Activated B cell treated with CpG ODN at 0.5 μM for 24 hours (primary cell): ENCODE measurements at regions of chr10 and their contacts with region 1.

Region 1: DNA sequence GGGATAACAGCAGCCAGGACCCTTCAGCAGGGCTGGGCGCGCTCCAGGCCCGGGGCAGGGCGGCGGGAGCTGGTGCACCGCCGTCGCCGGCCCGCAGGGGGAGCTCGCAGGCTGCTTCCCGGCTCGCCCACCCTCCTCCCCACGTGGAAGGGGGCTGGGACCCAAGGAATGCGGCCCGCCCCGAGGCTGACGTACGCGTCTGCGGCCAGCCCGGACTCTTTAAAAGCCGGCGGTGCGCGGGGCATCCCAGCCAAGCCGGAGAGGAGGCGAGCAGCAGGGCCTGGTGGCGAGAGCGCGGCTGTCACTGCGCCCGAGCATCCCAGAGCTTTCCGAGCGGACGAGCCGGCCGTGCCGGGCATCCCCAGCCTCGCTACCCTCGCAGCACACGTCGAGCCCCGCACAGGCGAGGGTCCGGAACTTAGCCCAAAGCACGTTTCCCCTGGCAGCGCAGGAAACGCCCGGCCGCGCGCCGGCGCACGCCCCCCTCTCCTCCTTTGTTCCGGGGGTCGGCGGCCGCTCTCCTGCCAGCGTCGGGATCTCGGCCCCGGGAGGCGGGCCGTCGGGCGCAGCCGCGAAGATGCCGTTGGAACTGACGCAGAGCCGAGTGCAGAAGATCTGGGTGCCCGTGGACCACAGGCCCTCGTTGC is at the start of gene PFKFB3:
- DNase-seq: peak; percentile 96
- ATAC-seq: peak; percentile 72
- H3K4me3 Mint-ChIP-seq: peak within 1 kb of the TSS; percentile 97
- H3K27ac Mint-ChIP-seq: peak within 1 kb of the TSS; percentile 82
- H3K4me1 Mint-ChIP-seq: peaks cover 33% of the 10 kb centered on the region
- H3K27me3 Mint-ChIP-seq: no peaks in the 10 kb centered on the region
- CTCF ChIP-seq: no peak
- total RNA-seq, gene PFKFB3: 96.7 and 105 TPM in 2 replicates

Region 2: DNA sequence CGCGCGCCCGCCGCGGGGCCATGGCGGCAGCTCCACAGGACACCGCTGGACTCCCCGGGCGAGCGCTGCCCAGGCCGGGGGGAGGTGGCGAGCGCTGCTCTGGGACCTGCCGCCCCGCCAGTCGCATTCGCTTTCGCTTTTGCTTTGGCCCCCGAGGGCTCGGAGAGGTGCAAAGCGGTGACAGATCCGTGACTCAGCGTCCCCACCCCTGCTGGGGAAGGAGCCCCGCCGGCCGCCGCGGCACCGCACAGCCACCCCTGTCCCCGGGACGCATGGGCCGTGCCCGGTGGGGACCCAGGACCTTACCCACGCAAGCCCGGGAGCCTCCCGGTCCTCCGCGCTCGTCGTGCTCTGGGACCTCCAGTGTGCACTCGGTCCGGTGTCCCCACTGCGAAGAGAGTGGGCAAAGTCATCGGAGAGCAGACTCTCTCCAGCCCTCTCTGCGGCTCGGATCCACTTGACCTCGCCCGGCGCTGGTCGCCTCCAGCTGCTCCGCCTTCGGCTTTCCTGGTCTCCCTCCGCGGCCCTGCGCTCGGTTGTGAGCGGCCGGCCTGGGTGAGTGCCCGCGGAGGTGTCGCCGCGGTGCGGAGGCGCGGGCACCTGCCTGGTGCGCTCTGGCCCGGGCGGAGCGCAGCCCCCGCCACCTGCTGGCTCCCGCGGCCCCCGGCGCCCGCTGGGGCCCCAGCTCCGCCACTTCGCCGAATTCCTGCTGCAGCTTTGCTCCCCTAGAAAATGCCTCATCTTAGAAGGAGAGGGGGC is 225.2 kb before region 1 on chr10 and contains the start of gene IL15RA:
- CTCF ChIA-PET with region 1: interaction called, 3 read pairs
- POLR2A ChIA-PET with region 1: interaction called, 6 read pairs
- intact Hi-C with region 1: loop called (anchors 2 kb)
- DNase-seq: peak; percentile 75
- ATAC-seq: peak; percentile 70
- H3K4me3 Mint-ChIP-seq: peak within 1 kb of the TSS; percentile 96
- H3K27ac Mint-ChIP-seq: peak within 1 kb of the TSS; percentile 91
- H3K4me1 Mint-ChIP-seq: peaks cover 41% of the 10 kb centered on the region
- H3K27me3 Mint-ChIP-seq: no peaks in the 10 kb centered on the region
- CTCF ChIP-seq: no peak
- total RNA-seq, gene IL15RA: 19.1 and 19.8 TPM in 2 replicates

Region 3: DNA sequence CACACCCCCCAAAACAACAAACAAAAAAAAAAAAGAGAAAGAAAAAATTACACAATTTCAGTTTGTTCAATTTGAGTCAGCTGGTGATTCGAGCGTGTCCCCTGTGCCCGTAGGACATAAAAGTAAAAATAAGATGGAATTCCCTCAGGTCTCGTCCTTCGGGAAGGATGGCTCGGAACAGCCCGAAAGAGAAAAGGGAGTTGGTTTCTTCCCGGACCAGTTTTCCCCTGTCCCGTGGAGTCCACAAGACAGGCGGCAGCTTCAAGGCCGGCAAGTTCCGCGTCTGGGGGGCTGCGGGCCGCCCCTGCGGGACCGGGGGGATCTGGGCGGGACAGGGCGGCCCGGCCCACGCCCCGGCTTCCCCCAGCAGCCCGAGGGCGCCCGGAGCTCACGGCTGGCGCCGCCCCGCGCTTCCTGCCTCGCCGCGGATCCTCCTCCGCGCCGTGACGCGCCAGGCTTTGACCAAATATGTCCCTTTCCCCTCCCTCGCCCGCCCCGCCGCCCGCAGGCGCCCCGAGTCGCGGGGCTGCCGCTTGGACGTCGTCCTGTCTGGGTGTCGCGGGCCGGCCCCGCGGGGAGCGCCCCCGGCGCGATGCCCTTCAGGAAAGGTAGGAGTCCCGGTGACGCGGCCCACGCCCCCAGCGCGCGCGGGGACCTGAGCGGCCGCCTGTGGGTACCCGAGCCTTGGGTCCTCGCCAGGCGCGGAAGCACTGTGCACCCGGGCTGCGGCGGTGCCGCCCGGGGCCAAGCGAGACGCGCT is 58.2 kb before region 1 on chr10:
- CTCF ChIA-PET with region 1: interaction called, 3 read pairs
- POLR2A ChIA-PET with region 1: interaction called, 8 read pairs
- intact Hi-C with region 1: loop called (anchors 1 kb)
- DNase-seq: peak; percentile 85
- ATAC-seq: peak; percentile 86
- H3K4me3 Mint-ChIP-seq: peak overlapping the region; percentile 88
- H3K27ac Mint-ChIP-seq: peak overlapping the region; percentile 77
- H3K4me1 Mint-ChIP-seq: peaks cover 66% of the 10 kb centered on the region
- H3K27me3 Mint-ChIP-seq: no peaks in the 10 kb centered on the region
- CTCF ChIP-seq: no peak

Region 4: GRCh38 chr10:6275022-6275997 is 72.5 kb after region 1 on chr10:
- CTCF ChIA-PET with region 1: interaction called, 4 read pairs
- POLR2A ChIA-PET with region 1: interaction called, 12 read pairs
- intact Hi-C with region 1: loop called (anchors 2 kb)
- DNase-seq: peak; percentile 62
- ATAC-seq: peak; percentile 94
- H3K4me3 Mint-ChIP-seq: peak overlapping the region; percentile 80
- H3K27ac Mint-ChIP-seq: peak overlapping the region; percentile 93
- H3K4me1 Mint-ChIP-seq: peaks cover 28% of the 10 kb centered on the region
- H3K27me3 Mint-ChIP-seq: no peaks in the 10 kb centered on the region
- CTCF ChIP-seq: no peak

Region 5: GRCh38 chr10:6328699-6329423 is 126.1 kb after region 1 on chr10:
- CTCF ChIA-PET with region 1: no interaction called
- POLR2A ChIA-PET with region 1: interaction called, 10 read pairs
- intact Hi-C with region 1: no loop called
- DNase-seq: peak; percentile 32
- ATAC-seq: peak; percentile 73
- H3K4me3 Mint-ChIP-seq: peak overlapping the region; percentile 61
- H3K27ac Mint-ChIP-seq: peak overlapping the region; percentile 80
- H3K4me1 Mint-ChIP-seq: peaks cover 27% of the 10 kb centered on the region
- H3K27me3 Mint-ChIP-seq: no peaks in the 10 kb centered on the region
- CTCF ChIP-seq: no peak